GM12878 (cell line): ENCODE measurements at regions of chr12 and their contacts with region 1.

Region 1: GRCh38 chr12:68317047-68317667 is 15.0 kb downstream of the MDM1 start:
- DNase-seq: no peak
- ATAC-seq: peak; percentile 51; the same call in 1 of the 3 replicates
- H3K4me3 ChIP-seq: no peak overlapping the region
- H3K27ac ChIP-seq: no peak overlapping the region
- H3K4me1 ChIP-seq: no peaks in the 10 kb centered on the region
- H3K27me3 ChIP-seq: no peaks in the 10 kb centered on the region
- CTCF ChIP-seq: peak; percentile 32 to 65 (median 33); a peak in 4 of 6 replicates
- EP300 ChIP-seq: no peak
- POLR2A ChIP-seq: no peak
- RAD21 ChIP-seq: peak; percentile 85

Region 2: GRCh38 chr12:67928621-67929388 is 388.4 kb before region 1 on chr12:
- CTCF ChIA-PET with region 1: no interaction called
- POLR2A ChIA-PET with region 1: no interaction called
- RAD21 ChIA-PET with region 1: no interaction called
- SMC1A ChIA-PET with region 1: no interaction called
- in situ Hi-C with region 1: no loop called
- intact Hi-C with region 1: no loop called
- DNase-seq: no peak
- ATAC-seq: no peak
- H3K4me3 ChIP-seq: no peak overlapping the region
- H3K27ac ChIP-seq: no peak overlapping the region
- H3K4me1 ChIP-seq: no peaks in the 10 kb centered on the region
- H3K27me3 ChIP-seq: no peaks in the 10 kb centered on the region; a peak in 2 of 4 replicates
- CTCF ChIP-seq: no peak
- EP300 ChIP-seq: no peak
- POLR2A ChIP-seq: no peak
- RAD21 ChIP-seq: no peak

Region 3: GRCh38 chr12:68040450-68041075 is 276.6 kb before region 1 on chr12:
- CTCF ChIA-PET with region 1: interaction called, 46 read pairs
- POLR2A ChIA-PET with region 1: interaction called, 3 read pairs
- RAD21 ChIA-PET with region 1: interaction called, 23 read pairs
- SMC1A ChIA-PET with region 1: interaction called, 21 read pairs
- in situ Hi-C with region 1: loop called (anchors 5 kb)
- intact Hi-C with region 1: loop called (anchors 1 kb)
- DNase-seq: peak; percentile 26
- ATAC-seq: peak; percentile 76
- H3K4me3 ChIP-seq: no peak overlapping the region
- H3K27ac ChIP-seq: no peak overlapping the region
- H3K4me1 ChIP-seq: peaks cover 11% of the 10 kb centered on the region
- H3K27me3 ChIP-seq: no peaks in the 10 kb centered on the region
- CTCF ChIP-seq: peak; percentile 80 to 89 (median 85)
- EP300 ChIP-seq: no peak
- POLR2A ChIP-seq: no peak
- RAD21 ChIP-seq: peak; percentile 95

Region 4: DNA sequence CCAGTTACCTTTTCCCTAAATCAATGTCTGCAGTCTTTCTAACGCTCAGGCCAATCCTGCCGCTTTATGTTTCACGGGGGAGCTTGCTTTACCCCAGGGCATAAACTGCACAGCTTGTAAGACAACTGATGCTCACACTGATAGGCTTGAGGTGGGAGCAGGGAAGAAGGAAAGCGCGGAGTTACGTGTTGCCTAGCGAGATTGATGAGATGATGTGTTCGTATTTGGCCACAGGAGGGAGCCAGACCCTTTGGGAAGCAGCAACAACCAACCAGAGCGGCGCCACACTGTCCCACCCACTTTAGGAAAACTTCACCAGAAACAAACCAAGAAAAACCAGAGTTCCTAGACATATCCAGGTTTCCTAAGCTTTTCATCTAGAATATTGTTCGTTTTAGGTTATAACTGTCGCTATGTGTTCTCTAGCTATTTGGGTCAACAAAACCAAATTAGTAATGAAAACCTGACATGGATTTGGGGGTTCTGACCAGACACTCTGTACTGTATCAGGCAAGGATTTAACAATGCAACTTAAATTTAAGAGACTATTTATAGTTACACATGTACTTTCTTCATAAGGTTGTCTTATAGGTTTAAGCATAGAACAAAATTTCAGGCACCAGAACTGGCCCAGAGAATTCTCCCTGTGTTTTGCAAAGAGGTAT is 93.9 kb before region 1 on chr12:
- CTCF ChIA-PET with region 1: interaction called, 189 read pairs
- POLR2A ChIA-PET with region 1: no interaction called
- RAD21 ChIA-PET with region 1: interaction called, 72 read pairs
- SMC1A ChIA-PET with region 1: interaction called, 147 read pairs
- in situ Hi-C with region 1: no loop called
- intact Hi-C with region 1: loop called (anchors 1 kb)
- DNase-seq: peak; percentile 71
- ATAC-seq: peak; percentile 100
- H3K4me3 ChIP-seq: no peak overlapping the region
- H3K27ac ChIP-seq: no peak overlapping the region
- H3K4me1 ChIP-seq: no peaks in the 10 kb centered on the region
- H3K27me3 ChIP-seq: no peaks in the 10 kb centered on the region; a peak in 1 of 4 replicates
- CTCF ChIP-seq: peak; percentile 79 to 84 (median 81)
- EP300 ChIP-seq: no peak
- POLR2A ChIP-seq: no peak
- RAD21 ChIP-seq: peak; percentile 98

Region 5: GRCh38 chr12:68236421-68237059 is 80.6 kb before region 1 on chr12:
- CTCF ChIA-PET with region 1: interaction called, 47 read pairs
- POLR2A ChIA-PET with region 1: no interaction called
- RAD21 ChIA-PET with region 1: interaction called, 16 read pairs
- SMC1A ChIA-PET with region 1: interaction called, 35 read pairs
- in situ Hi-C with region 1: loop called (anchors 5 kb)
- intact Hi-C with region 1: no loop called
- DNase-seq: peak; percentile 40
- ATAC-seq: peak; percentile 65
- H3K4me3 ChIP-seq: peak overlapping the region; percentile 41; the same call in 1 of the 2 replicates
- H3K27ac ChIP-seq: peak overlapping the region; percentile 69
- H3K4me1 ChIP-seq: peaks cover 34% of the 10 kb centered on the region
- H3K27me3 ChIP-seq: no peaks in the 10 kb centered on the region
- CTCF ChIP-seq: no peak; a peak in 1 of 6 replicates
- EP300 ChIP-seq: no peak
- POLR2A ChIP-seq: no peak
- RAD21 ChIP-seq: no peak

Region 6: GRCh38 chr12:68279227-68280054 is 37.7 kb before region 1 on chr12:
- CTCF ChIA-PET with region 1: interaction called, 9 read pairs
- POLR2A ChIA-PET with region 1: interaction called, 4 read pairs
- RAD21 ChIA-PET with region 1: no interaction called
- SMC1A ChIA-PET with region 1: interaction called, 6 read pairs
- in situ Hi-C with region 1: no loop called
- intact Hi-C with region 1: loop called (anchors 5 kb)
- DNase-seq: no peak
- ATAC-seq: no peak
- H3K4me3 ChIP-seq: no peak overlapping the region
- H3K27ac ChIP-seq: no peak overlapping the region
- H3K4me1 ChIP-seq: peaks cover 9% of the 10 kb centered on the region; the same call in 1 of the 2 replicates
- H3K27me3 ChIP-seq: no peaks in the 10 kb centered on the region
- CTCF ChIP-seq: no peak
- EP300 ChIP-seq: no peak
- POLR2A ChIP-seq: no peak
- RAD21 ChIP-seq: no peak

Region 7: GRCh38 chr12:68303850-68304249 is 13.3 kb before region 1 on chr12:
- CTCF ChIA-PET with region 1: interaction called, 14 read pairs
- POLR2A ChIA-PET with region 1: no interaction called
- RAD21 ChIA-PET with region 1: interaction called, 3 read pairs
- SMC1A ChIA-PET with region 1: interaction called, 14 read pairs
- in situ Hi-C with region 1: no loop called
- intact Hi-C with region 1: no loop called
- DNase-seq: no peak
- ATAC-seq: no peak
- H3K4me3 ChIP-seq: no peak overlapping the region
- H3K27ac ChIP-seq: no peak overlapping the region
- H3K4me1 ChIP-seq: peaks cover 8% of the 10 kb centered on the region
- H3K27me3 ChIP-seq: no peaks in the 10 kb centered on the region
- CTCF ChIP-seq: no peak
- EP300 ChIP-seq: no peak
- POLR2A ChIP-seq: no peak
- RAD21 ChIP-seq: no peak